A673 (cell line): ENCODE measurements at regions of chr6 and their contacts with region 1.

Region 1: DNA sequence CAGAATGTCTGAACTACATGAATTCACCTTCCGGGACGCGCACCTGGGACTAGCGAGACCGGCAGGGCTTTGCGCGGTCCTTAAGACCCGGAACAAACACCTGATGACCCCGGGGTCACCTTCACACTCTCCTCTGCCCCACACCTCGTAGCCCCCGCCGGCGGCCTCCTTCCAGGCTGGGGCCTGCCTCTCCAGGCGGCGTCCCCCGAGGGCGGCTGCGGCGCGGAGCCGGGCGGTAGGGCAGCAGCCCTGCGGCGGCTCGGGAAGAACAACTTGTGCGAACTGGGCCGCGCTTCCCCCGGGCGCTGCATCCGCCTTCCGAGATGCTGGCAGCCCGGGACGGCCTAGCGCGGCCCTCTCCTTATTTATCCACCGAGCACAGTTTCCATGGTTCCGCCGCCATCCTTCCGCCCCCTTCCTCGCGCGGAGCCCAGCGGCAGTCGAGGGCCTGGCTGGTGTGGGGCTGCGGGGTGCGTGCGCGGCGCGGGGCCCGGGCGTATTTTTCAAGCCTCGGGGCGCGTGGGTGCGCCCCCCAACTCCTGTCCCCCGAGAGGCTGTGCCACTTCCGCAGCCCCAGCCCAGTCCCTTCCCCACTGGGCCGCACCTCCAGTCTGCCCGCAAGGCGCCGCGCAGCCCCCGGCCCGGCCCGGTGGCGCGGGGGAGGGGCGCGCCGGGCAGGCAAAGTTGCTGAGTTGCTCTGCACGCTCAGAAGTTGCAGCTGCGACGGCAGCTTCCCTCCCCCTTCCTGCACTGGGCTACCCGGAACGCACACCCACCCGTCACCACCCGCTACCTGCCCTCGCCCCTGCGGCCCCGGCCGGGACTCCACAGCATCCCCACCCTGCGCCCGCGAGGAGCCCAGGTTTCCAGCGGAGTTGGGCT is 56.3 kb upstream of the RREB1 start:
- DNase-seq: peak; percentile 75
- H3K4me3 ChIP-seq: peak overlapping the region; percentile 70
- H3K27ac ChIP-seq: peak overlapping the region; percentile 75
- H3K4me1 ChIP-seq: peaks cover 46% of the 10 kb centered on the region
- H3K27me3 ChIP-seq: no peaks in the 10 kb centered on the region
- CTCF ChIP-seq: no peak

Region 2: GRCh38 chr6:6696867-6697531 is 354.5 kb before region 1 on chr6:
- CTCF ChIA-PET with region 1: interaction called, 5 read pairs
- POLR2A ChIA-PET with region 1: no interaction called
- intact Hi-C with region 1: loop called (anchors 10 kb)
- DNase-seq: peak; percentile 91
- H3K4me3 ChIP-seq: no peak overlapping the region
- H3K27ac ChIP-seq: peak overlapping the region; percentile 14
- H3K4me1 ChIP-seq: peaks cover 44% of the 10 kb centered on the region
- H3K27me3 ChIP-seq: no peaks in the 10 kb centered on the region
- CTCF ChIP-seq: peak; percentile 99

Region 3: DNA sequence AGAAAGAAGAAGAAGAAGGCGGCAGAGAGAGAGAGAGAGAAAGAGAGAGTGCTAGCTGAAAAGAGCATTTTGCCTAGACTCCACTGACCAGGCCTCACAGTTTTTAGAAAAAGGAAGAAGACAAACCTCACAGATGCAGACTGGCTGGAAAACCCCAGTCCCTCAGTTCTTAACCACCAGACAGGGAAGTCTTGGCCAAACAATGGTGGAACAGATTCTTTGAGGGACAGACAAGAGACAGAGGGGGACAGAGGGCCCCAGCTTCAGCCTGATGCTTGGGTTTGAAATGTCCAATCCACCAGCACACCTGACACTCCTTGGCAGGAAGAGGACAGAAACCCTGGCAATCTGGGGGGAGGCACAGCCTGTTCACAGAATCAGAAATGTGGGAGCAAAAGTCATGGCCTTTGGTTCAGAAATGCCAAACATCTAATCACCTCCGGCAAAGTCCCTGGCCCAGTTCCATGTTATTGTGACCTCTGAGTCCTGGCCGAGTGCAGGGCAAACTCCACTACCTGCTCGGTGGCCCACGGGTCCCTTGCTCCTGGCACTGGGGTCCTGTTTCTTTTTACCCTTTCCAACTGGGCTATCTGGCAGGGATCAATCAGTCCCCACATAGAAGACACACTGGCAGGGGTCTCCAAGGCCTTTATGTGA is 227.8 kb before region 1 on chr6:
- CTCF ChIA-PET with region 1: no interaction called
- POLR2A ChIA-PET with region 1: no interaction called
- intact Hi-C with region 1: no loop called
- DNase-seq: no peak
- H3K4me3 ChIP-seq: no peak overlapping the region
- H3K27ac ChIP-seq: no peak overlapping the region
- H3K4me1 ChIP-seq: peaks cover 8% of the 10 kb centered on the region
- H3K27me3 ChIP-seq: no peaks in the 10 kb centered on the region
- CTCF ChIP-seq: no peak

Region 4: GRCh38 chr6:6834356-6835222 is 216.9 kb before region 1 on chr6:
- CTCF ChIA-PET with region 1: no interaction called
- POLR2A ChIA-PET with region 1: no interaction called
- intact Hi-C with region 1: loop called (anchors 5 kb)
- DNase-seq: no peak
- H3K4me3 ChIP-seq: no peak overlapping the region
- H3K27ac ChIP-seq: peak overlapping the region; percentile 93
- H3K4me1 ChIP-seq: peaks cover 45% of the 10 kb centered on the region
- H3K27me3 ChIP-seq: no peaks in the 10 kb centered on the region
- CTCF ChIP-seq: no peak

Region 5: GRCh38 chr6:7021301-7021700 is 30.2 kb before region 1 on chr6:
- CTCF ChIA-PET with region 1: no interaction called
- POLR2A ChIA-PET with region 1: no interaction called
- intact Hi-C with region 1: no loop called
- DNase-seq: no peak
- H3K4me3 ChIP-seq: no peak overlapping the region
- H3K27ac ChIP-seq: no peak overlapping the region
- H3K4me1 ChIP-seq: no peaks in the 10 kb centered on the region
- H3K27me3 ChIP-seq: no peaks in the 10 kb centered on the region
- CTCF ChIP-seq: no peak

Region 6: GRCh38 chr6:7107578-7108195 is 56.2 kb after region 1 on chr6 and contains the start of gene RREB1:
- CTCF ChIA-PET with region 1: no interaction called
- POLR2A ChIA-PET with region 1: interaction called, 3 read pairs
- intact Hi-C with region 1: loop called (anchors 5 kb)
- DNase-seq: peak; percentile 80
- H3K4me3 ChIP-seq: peak within 1 kb of the TSS; percentile 78
- H3K27ac ChIP-seq: peak within 1 kb of the TSS; percentile 67
- H3K4me1 ChIP-seq: peaks cover 32% of the 10 kb centered on the region
- H3K27me3 ChIP-seq: no peaks in the 10 kb centered on the region
- CTCF ChIP-seq: no peak
- total RNA-seq, gene RREB1: 55.5 and 61.6 TPM in 2 replicates

Region 7: DNA sequence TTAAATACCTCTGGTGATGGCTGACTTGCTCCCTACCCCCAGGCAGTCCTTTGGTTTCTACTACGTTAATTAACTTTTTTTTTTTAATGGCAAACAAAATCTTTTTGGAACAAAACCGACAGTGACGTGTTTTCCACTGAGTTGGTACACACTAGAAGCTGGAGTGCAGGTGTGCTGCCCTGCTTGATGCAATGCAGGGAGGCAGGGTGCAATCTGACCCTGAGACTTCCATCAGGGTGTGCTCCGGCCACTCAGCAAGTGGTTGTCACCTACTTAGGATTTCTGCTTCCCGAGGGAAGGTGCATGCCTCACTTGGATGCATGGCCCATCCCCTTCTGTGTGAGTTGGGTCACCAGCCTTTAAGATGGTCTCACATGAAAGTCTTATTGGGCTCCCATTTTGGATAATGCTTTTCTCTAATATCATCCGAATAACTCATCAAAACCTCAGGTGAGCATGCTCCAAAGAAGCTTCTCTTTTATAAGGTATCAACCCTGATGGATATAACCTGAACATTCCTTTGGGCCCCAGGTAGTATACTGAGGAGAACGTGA is 70.3 kb after region 1 on chr6:
- CTCF ChIA-PET with region 1: no interaction called
- POLR2A ChIA-PET with region 1: no interaction called
- intact Hi-C with region 1: no loop called
- DNase-seq: no peak
- H3K4me3 ChIP-seq: no peak overlapping the region
- H3K27ac ChIP-seq: no peak overlapping the region
- H3K4me1 ChIP-seq: peaks cover 16% of the 10 kb centered on the region
- H3K27me3 ChIP-seq: no peaks in the 10 kb centered on the region
- CTCF ChIP-seq: no peak

Region 8: DNA sequence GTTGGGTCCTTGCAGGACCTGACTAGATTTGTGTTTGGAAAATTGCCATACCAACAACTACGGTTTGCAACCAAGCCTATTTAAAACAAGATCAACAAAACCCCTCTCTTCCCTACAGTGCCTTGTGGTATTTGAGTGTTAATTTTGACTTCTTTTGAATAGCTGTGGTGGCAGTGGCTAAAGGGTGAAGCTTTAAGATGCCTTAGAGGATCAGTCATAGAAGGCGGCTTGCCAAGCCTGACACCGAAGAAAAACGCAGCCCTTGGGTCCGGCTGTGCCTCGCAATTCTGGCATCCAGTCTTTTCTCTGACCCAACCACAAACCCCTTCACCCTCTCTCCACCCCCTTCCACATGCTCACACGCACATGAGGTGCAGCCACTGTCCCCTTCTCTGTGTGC is 707.0 kb after region 1 on chr6:
- CTCF ChIA-PET with region 1: no interaction called
- POLR2A ChIA-PET with region 1: no interaction called
- intact Hi-C with region 1: no loop called
- DNase-seq: no peak
- H3K4me3 ChIP-seq: no peak overlapping the region
- H3K27ac ChIP-seq: no peak overlapping the region
- H3K4me1 ChIP-seq: no peaks in the 10 kb centered on the region
- H3K27me3 ChIP-seq: no peaks in the 10 kb centered on the region
- CTCF ChIP-seq: no peak